Posterior cingulate gyrus (tissue), 11 donors: ENCODE measurements at regions of chr22 and their contacts with region 1.

Region 1: DNA sequence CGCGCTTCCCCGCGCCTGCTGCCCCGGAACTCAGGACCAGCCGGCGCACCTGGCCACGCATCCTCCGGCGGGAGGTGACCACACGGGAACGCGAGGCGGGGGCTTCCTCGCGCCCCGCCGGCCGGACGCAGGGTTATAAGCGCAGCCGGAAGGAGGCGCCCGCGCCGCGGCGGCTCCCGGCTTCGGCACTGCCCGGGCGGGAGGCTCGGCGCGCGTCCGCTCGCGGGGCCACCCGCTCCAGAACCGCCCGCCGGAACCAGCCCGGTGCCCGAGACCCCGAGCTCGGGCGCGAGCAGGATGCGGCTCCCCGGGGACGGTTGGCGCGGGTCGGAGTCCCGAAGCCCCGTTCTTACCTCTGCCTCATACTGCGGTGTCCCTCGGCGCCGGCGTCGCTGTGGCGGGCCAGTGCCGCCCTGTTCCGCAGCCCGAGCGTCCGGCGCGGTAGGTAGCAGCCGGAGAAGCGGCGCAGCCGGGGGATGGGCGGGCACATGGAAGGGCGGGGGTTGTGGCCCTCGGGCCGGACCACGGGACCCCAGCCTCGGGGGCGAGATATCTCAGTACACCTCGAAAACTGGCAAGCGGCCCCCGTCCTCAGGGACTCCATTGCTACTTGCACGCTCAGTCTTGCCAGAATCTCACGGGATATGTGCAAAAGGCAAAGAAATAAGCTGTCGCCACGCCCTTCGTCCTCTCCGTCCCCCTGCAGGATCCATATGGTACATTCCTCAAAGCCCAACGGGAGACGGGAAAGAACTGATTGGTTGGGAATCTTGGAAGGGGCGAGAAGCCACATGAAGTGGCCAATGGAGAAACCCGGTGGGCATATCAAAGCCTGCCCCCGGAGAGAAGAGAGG is 23.1 kb downstream of the MICAL3 start:
- DNase-seq: peak; percentile 81 to 98 (median 85)

Region 2: GRCh38 chr22:17910561-17911311 is 90.5 kb before region 1 on chr22:
- intact Hi-C with region 1: loop called (anchors 5 kb)
- DNase-seq: peak; percentile 70 to 96 (median 75)

Region 3: DNA sequence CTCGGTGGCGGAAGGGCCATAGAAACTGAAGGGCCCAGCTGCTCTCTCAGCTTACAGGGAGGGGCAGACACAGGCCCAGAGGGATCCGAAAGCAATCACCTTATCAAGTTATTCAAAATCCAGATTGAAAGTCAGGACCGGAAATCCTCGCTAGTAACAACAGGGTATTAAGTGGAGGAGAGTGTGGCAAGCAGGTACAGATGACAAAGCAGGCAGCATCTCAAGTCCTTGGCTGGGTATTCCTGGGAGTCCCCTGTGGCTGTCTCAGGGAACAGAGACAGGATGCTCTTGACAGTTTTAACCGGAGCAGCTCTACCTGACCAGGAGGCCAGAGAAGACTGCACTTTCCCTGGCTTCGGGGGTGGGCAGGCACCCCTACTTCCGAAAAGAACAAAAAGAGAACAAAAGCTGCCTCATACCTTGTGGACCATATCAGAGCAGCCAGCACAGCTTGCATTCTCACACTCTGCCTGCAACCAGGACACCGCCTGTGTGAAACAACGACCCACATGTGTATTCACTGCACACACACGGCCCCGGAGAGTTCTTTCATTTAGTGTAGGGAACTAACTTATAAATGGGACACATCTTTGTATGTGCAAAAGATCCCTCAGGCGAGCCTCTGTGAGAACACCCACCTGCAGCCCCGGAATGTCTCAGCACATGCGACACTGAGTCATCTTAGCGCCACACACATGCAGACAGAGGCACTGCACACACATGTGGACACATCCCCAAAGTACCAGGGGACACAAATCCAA is 55.2 kb before region 1 on chr22:
- intact Hi-C with region 1: no loop called
- DNase-seq: peak in 1 of 10 donors; percentile 90

Region 4: GRCh38 chr22:18024276-18024947 is 23.1 kb after region 1 on chr22 and contains the start of gene MICAL3:
- intact Hi-C with region 1: loop called (anchors 2 kb)
- DNase-seq: peak; percentile 52 to 96 (median 72)